ENCODE measurements at regions of chr22 and their contacts with region 1.

Region 1: DNA sequence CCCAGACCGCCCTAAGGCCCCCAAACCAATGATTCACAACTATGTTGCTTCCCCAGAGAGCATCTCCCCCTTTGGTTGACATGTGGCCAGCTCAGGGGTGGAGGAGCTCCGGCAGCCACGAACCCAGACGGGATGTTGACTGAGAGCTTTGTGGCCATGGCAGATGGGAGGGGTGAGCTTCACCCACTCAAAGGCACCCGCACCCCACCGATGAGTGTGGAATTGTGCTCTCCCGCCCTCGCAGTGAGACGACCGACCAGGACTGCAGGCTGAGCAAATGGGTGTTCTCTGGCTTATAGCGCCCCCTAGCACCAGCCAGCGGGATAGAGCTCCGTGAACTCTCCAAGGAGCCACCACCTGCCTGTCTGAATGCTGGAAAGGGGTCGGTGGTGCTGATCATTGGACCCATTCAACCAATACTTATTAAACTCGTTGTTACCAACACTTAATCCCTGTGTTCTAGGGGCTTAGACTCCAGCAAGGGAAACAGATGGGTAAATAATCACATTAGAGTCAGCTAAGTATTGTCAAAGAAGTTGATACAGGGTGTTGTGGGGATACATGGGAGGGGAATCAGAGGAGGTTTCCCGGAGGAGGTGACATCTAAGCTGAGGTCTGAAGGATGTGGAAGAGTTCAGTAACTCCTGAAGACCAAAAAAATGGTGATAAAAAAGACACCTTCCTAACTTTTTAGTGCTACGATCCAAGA is 4.5 kb upstream of the TIMP3 start:
- DNase-seq: peak in 33 of 35 experiments; percentile 8 to 69 (median 40)
- ATAC-seq: peak; percentile 40 to 70 (median 65)
- H3K4me3 ChIP-seq: no peak overlapping the region
- H3K4me3 Mint-ChIP-seq: no peak overlapping the region
- H3K27ac ChIP-seq: no peak overlapping the region
- H3K27ac Mint-ChIP-seq: no peak overlapping the region
- H3K4me1 ChIP-seq: peaks cover 0 to 5% of the 10 kb centered on the region in 2 experiments
- H3K4me1 Mint-ChIP-seq: peaks cover 0 to 11% (median 6%) of the 10 kb centered on the region in 3 donors
- H3K27me3 ChIP-seq: peaks cover 0 to 20% of the 10 kb centered on the region in 2 experiments
- H3K27me3 Mint-ChIP-seq: peaks cover 39 to 44% of the 10 kb centered on the region in 2 donors

Region 2: DNA sequence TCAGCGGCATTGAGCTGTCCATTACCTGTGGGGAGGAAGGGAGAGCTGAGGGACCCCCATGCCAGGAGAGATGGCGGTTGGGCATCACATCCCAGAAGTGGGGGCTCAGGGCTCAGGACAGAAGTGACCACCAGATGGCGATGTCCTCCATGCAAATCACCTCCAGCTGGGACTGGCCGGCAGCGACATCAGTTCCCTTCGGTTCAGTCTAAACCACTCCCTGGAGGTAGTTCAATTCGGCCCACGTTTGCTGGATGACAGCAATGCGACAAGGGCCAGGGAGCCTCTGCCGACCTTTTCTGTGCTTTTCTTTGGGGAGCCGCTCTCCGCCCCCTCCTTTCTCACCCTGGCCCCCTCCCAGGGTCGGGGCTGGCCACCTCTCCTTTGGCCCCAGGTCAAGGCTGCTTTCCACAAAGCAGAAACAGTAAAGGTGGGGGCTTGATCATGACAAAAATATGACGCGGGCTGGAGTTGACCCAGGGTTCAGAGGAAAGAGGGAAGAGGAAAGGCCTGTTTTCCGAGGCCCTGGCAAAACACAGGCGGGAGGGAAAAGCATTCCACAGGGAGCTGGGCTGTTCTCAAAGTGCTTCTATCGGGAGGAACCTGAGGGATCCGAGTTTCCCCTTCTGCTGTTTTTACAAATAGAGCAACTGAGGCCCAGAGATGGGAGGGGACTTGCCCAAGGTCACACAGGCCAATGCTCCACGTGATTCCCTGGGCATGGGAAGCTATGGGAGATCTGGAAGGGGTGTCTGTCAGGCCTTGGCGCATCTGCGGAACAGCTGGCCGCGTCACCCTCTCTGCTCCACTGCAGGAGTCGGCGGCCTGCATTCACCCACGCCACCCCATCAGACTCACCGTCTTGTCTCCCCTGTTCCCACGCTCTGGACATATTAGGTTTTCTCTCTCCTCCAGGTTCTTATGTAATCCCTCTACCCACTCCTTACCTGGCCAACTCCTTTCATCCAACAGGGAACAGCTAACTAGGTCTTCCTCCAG is 267.7 kb before region 1 on chr22:
- CTCF ChIA-PET with region 1: interaction called, 9 to 10 read pairs
- POLR2A ChIA-PET with region 1: no interaction called
- DNase-seq: peak; percentile 7 to 77 (median 45)
- ATAC-seq: peak in 2 of 4 experiments; percentile 46 to 67
- H3K4me3 ChIP-seq: no peak overlapping the region
- H3K4me3 Mint-ChIP-seq: no peak overlapping the region
- H3K27ac ChIP-seq: no peak overlapping the region
- H3K27ac Mint-ChIP-seq: no peak overlapping the region
- H3K4me1 ChIP-seq: peaks cover 0 to 3% of the 10 kb centered on the region in 2 experiments
- H3K4me1 Mint-ChIP-seq: peaks cover 0 to 1% (median 0%) of the 10 kb centered on the region in 3 donors
- H3K27me3 ChIP-seq: peaks cover 0 to 36% of the 10 kb centered on the region in 2 experiments
- H3K27me3 Mint-ChIP-seq: peaks cover 12 to 18% of the 10 kb centered on the region in 2 donors

Region 3: GRCh38 chr22:32660292-32660691 is 136.7 kb before region 1 on chr22:
- CTCF ChIA-PET with region 1: interaction called, 15 to 54 read pairs
- POLR2A ChIA-PET with region 1: no interaction called
- DNase-seq: peak in 32 of 35 experiments; percentile 8 to 70 (median 40)
- ATAC-seq: peak in 1 of 4 experiments; percentile 36
- H3K4me3 ChIP-seq: no peak overlapping the region
- H3K4me3 Mint-ChIP-seq: no peak overlapping the region
- H3K27ac ChIP-seq: no peak overlapping the region
- H3K27ac Mint-ChIP-seq: no peak overlapping the region
- H3K4me1 ChIP-seq: no peaks in the 10 kb centered on the region
- H3K4me1 Mint-ChIP-seq: peaks cover 0 to 2% (median 0%) of the 10 kb centered on the region in 3 donors
- H3K27me3 ChIP-seq: peaks cover 0 to 8% of the 10 kb centered on the region in 2 experiments
- H3K27me3 Mint-ChIP-seq: peaks cover 9% of the 10 kb centered on the region in 2 donors